ENCODE measurements at regions of chr20 and their contacts with region 1.

Region 1: DNA sequence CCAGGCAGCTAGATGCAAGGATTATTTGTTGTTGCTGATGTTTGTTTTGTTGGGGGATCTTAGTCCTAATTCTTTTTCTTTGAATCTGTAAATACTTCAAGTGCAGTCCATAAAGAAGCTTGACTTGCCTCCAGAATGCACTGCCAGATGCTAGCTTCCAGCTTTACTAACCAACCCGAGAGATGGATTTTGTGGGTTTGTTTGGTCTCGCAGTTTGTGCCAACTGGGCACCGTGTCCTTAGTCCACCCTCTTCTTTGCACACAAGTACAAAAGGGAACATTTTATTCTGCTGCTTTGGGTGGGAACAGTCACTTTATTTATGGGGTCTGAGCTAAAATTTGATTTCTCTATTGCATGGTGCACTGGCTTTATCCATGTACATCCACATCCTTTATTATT is 212.0 kb downstream of the PLCB1 start:
- DNase-seq: no peak

Region 2: GRCh38 chr20:7967199-7967844 is 376.8 kb before region 1 on chr20:
- intact Hi-C with region 1: loop called in 1 of 2 experiments (anchors 10 kb)
- DNase-seq: no peak